ENCODE measurements at regions of chr10 and their contacts with region 1.

Region 1: GRCh38 chr10:48670978-48671913 is 13.4 kb upstream of the WDFY4 start:
- DNase-seq: no peak
- ATAC-seq: peak; percentile 82
- H3K4me3 ChIP-seq: peak overlapping the region; percentile 56
- H3K27ac ChIP-seq: peak overlapping the region; percentile 100
- H3K4me1 ChIP-seq: peaks cover 43% of the 10 kb centered on the region
- H3K27me3 ChIP-seq: no peaks in the 10 kb centered on the region; a peak in 1 of 4 replicates
- CTCF ChIP-seq: no peak
- EP300 ChIP-seq: peak; percentile 66 to 87; a peak in 3 of 4 replicates
- POLR2A ChIP-seq: peak; percentile 80
- RAD21 ChIP-seq: peak; percentile 25; the same call in 1 of the 2 replicates

Region 2: DNA sequence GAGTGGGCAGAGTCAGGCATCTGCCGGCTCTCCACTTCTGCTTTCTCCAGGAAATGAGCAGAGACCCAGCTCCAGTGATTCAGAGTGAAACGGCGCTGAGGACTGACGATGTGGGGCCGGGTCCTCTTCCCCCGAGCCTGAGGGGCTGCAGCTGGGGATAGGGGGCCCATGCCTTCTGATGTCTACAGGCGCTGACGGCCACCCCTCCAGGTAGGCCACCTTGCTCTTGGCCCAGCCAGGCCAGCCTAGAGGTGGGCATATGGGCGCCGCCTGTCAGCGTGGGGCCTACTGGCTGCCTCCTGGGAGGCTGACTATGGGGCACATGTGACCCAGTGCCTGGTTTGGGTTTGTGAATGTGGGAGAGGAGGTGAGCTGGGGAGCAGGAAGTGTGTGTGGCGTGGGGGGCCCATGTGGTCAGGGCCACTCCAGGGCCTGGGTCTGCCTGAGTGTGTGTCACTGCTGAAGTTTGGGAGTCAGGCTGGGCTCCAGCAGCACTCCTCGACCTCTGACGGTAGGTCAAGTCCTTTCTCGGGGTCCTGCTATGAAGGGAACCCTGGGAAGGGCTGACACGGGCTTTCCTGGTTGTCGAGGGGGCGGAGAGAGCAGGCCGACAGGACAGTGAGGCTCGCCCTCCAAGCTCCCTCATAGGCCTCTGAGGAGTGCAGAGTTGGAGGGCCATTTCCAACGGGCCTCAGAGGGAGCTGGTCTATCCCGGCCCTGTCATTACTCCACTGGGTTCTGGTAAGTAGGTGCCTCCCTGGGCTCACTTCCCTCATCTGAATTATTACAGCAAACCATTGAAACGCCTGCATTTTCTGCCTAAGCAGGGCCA is 13.8 kb after region 1 on chr10 and contains the start of gene WDFY4:
- CTCF ChIA-PET with region 1: interaction called, 22 read pairs
- POLR2A ChIA-PET with region 1: interaction called, 79 read pairs
- RAD21 ChIA-PET with region 1: interaction called, 87 read pairs
- SMC1A ChIA-PET with region 1: interaction called, 85 read pairs
- in situ Hi-C with region 1: no loop called
- intact Hi-C with region 1: loop called (anchors 1 kb)
- DNase-seq: no peak
- ATAC-seq: peak; percentile 79
- H3K4me3 ChIP-seq: peak within 1 kb of the TSS; percentile 70
- H3K27ac ChIP-seq: peak within 1 kb of the TSS; percentile 96
- H3K4me1 ChIP-seq: peaks cover 28% of the 10 kb centered on the region
- H3K27me3 ChIP-seq: no peaks in the 10 kb centered on the region
- CTCF ChIP-seq: no peak
- EP300 ChIP-seq: no peak
- POLR2A ChIP-seq: peak; percentile 80; the same call in 1 of the 2 replicates
- RAD21 ChIP-seq: no peak
- polyA plus RNA-seq, gene WDFY4: 13.5 to 13.9 TPM

Region 3: DNA sequence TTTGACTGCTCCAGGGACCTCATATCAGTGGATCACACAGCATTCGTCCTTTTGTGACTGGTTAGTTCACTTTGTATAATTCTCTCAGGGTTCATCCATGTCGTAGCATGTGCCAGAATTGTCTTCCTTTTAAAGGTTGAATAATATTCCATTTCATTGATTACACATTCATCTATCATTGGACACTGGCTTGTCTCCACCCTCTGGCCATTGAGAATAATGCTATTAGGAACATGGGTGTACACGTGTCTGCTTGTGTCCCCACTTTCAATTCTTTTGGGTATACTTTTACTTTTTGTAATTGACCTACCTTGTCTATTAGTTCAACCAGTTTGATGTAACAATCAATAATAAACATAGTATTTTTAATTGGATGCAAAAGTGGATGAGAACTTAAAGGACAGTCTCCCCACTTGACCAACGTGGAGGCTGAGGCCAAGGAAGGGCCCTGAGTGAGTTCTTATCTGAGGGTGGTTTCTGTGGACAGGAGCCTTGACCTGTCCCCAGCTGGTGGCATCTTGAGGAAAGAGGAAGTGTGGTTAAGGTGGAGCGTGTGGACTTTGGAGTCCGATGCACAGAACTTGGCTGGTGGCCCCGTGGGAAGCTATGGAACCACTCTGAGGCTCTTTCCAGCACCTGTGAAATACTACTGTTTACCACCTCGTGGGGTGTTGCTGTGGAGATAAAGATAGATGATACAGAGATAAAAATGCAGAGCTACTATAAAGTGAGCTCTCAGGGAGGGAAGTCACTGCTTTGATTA is 30.1 kb after region 1 on chr10:
- CTCF ChIA-PET with region 1: interaction called, 23 read pairs
- POLR2A ChIA-PET with region 1: interaction called, 8 read pairs
- RAD21 ChIA-PET with region 1: interaction called, 16 read pairs
- SMC1A ChIA-PET with region 1: interaction called, 55 read pairs
- in situ Hi-C with region 1: no loop called
- intact Hi-C with region 1: no loop called
- DNase-seq: no peak
- ATAC-seq: peak; percentile 49
- H3K4me3 ChIP-seq: no peak overlapping the region
- H3K27ac ChIP-seq: no peak overlapping the region
- H3K4me1 ChIP-seq: peaks cover 38% of the 10 kb centered on the region
- H3K27me3 ChIP-seq: no peaks in the 10 kb centered on the region
- CTCF ChIP-seq: peak; percentile 23 to 59 (median 43); a peak in 4 of 6 replicates
- EP300 ChIP-seq: no peak
- POLR2A ChIP-seq: no peak
- RAD21 ChIP-seq: peak; percentile 73

Region 4: GRCh38 chr10:48759113-48759901 is 88.1 kb after region 1 on chr10:
- CTCF ChIA-PET with region 1: no interaction called
- POLR2A ChIA-PET with region 1: interaction called, 8 read pairs
- RAD21 ChIA-PET with region 1: interaction called, 5 read pairs
- SMC1A ChIA-PET with region 1: interaction called, 6 read pairs
- in situ Hi-C with region 1: no loop called
- intact Hi-C with region 1: loop called (anchors 1 kb)
- DNase-seq: peak; percentile 81
- ATAC-seq: peak; percentile 96
- H3K4me3 ChIP-seq: no peak overlapping the region
- H3K27ac ChIP-seq: peak overlapping the region; percentile 76
- H3K4me1 ChIP-seq: peaks cover 23% of the 10 kb centered on the region
- H3K27me3 ChIP-seq: no peaks in the 10 kb centered on the region
- CTCF ChIP-seq: 0 out of 6 replicates have a peak, but pooled peaks of 1 of the 3 experiments have one; percentile 2
- EP300 ChIP-seq: peak; percentile 78 to 83; a peak in 3 of 4 replicates
- POLR2A ChIP-seq: no peak
- RAD21 ChIP-seq: no peak

Measured in GM12878 (cell line).